ENCODE measurements at regions of chr1 and their contacts with region 1.

Region 1: GRCh38 chr1:198788561-198789064 is 149.8 kb downstream of the PTPRC start:
- DNase-seq: no peak
- ATAC-seq: peak in 4 of 8 donors; percentile 22 to 64 (median 48)
- H3K4me3 ChIP-seq: no peak overlapping the region
- H3K27ac ChIP-seq: no peak overlapping the region
- H3K4me1 ChIP-seq: peaks cover 0 to 8% (median 0%) of the 10 kb centered on the region in 9 donors
- H3K27me3 ChIP-seq: no peaks in the 10 kb centered on the region
- CTCF ChIP-seq: peak in 2 of 9 donors; percentile 21 to 39

Region 2: DNA sequence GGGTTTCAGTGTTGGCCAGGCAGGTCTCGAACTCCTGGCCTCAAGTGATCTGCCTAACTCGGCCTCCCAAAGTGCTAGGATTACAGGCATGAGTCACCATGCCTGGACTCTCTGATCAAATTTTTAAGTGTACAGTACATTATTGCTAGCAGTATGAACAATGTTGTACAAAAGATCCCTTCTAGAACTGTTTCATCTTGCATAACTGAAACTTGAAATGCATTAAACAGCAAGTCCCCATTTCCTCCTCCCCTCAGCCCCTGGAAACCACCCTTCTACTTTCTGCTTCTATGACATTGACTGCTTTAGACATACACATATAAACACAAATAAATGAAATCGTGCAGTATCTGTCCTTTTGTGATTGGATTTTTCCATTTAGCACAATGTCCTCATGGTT is 313.6 kb after region 1 on chr1:
- intact Hi-C with region 1: loop called in 1 of 10 experiments (anchors 10 kb)
- DNase-seq: no peak
- ATAC-seq: no peak
- H3K4me3 ChIP-seq: no peak overlapping the region
- H3K27ac ChIP-seq: no peak overlapping the region
- H3K4me1 ChIP-seq: no peaks in the 10 kb centered on the region
- H3K27me3 ChIP-seq: no peaks in the 10 kb centered on the region
- CTCF ChIP-seq: no peak

Region 3: GRCh38 chr1:199113265-199113869 is 324.8 kb after region 1 on chr1:
- intact Hi-C with region 1: loop called in 2 of 10 experiments (anchors 10 kb)
- DNase-seq: peak; percentile 29 to 33
- ATAC-seq: peak in 2 of 8 donors; percentile 33 to 42
- H3K4me3 ChIP-seq: no peak overlapping the region
- H3K27ac ChIP-seq: no peak overlapping the region
- H3K4me1 ChIP-seq: no peaks in the 10 kb centered on the region
- H3K27me3 ChIP-seq: no peaks in the 10 kb centered on the region
- CTCF ChIP-seq: peak; percentile 45 to 76 (median 65)

Measured in heart right ventricle (tissue), 16 donors.